ENCODE measurements at regions of chr1 and their contacts with region 1.

Region 1: DNA sequence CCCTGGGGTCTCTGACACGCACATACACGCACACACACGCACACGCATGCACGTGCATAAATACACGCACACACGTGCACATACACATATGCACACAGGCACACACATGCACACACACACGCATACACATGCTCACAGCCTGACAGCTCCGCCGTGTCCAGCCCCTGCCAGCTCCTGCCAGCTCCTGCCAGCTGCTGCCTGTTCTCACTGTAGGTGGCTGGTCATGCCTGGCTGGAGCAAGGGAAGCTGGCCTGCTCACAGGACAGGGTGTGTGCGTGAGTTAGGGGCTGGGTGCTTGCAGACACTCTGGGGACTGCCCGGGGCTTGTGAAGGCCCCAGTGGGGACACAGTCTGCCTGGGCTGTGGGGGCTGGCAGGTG is 4.9 kb downstream of the PLCH2 start:
- DNase-seq: no peak
- H3K4me3 ChIP-seq: no peak overlapping the region
- H3K27ac ChIP-seq: no peak overlapping the region
- H3K4me1 ChIP-seq: peaks cover 0 to 2% (median 0%) of the 10 kb centered on the region in 4 experiments; a peak in 1 of 7 replicates
- H3K27me3 ChIP-seq: 0 out of 7 replicates have a peak, but pooled peaks cover 0 to 2% (median 0%) of the 10 kb centered on the region in 4 experiments
- CTCF ChIP-seq: no peak
- EP300 ChIP-seq: no peak
- POLR2A ChIP-seq: no peak
- RAD21 ChIP-seq: no peak

Region 2: GRCh38 chr1:2470290-2471158 is 10.5 kb before region 1 on chr1:
- CTCF ChIA-PET with region 1: interaction called, 14 read pairs
- POLR2A ChIA-PET with region 1: no interaction called
- DNase-seq: no peak
- H3K4me3 ChIP-seq: no peak overlapping the region
- H3K27ac ChIP-seq: no peak overlapping the region
- H3K4me1 ChIP-seq: peaks cover 0 to 8% (median 0%) of the 10 kb centered on the region in 4 experiments; a peak in 3 of 7 replicates
- H3K27me3 ChIP-seq: no peaks in the 10 kb centered on the region; a peak in 2 of 7 replicates
- CTCF ChIP-seq: no peak
- EP300 ChIP-seq: no peak
- POLR2A ChIP-seq: no peak
- RAD21 ChIP-seq: no peak

Measured in H1 (cell line).